ENCODE measurements at regions of chr14 and their contacts with region 1.

Region 1: DNA sequence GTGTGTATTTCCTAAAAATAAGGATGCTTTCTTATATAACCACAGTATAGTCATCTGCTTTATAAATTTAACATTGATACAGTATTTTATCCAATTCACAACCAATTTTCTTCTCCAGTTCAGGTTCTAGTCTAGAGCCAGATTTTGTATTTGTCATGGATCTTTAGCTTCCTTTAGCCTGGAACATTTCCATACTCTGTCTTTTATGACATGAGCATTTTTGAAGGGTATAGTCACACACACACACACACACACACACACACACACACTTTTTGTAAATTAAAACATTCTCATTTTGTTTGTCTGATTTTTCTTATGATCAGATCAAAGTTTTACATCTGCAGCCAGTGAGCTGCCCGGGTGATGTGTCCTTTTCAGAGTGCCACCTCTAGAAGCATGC is 25.4 kb downstream of the CGRRF1 start:
- DNase-seq: no peak
- ATAC-seq: no peak
- H3K4me3 ChIP-seq: no peak overlapping the region
- H3K4me3 Mint-ChIP-seq: no peak overlapping the region
- H3K27ac ChIP-seq: no peak overlapping the region
- H3K27ac Mint-ChIP-seq: no peak overlapping the region
- H3K4me1 ChIP-seq: no peaks in the 10 kb centered on the region
- H3K4me1 Mint-ChIP-seq: peaks cover 0 to 2% (median 0%) of the 10 kb centered on the region in 3 donors
- H3K27me3 ChIP-seq: no peaks in the 10 kb centered on the region
- H3K27me3 Mint-ChIP-seq: no peaks in the 10 kb centered on the region

Region 2: GRCh38 chr14:54147282-54147681 is 387.8 kb before region 1 on chr14:
- CTCF ChIA-PET with region 1: no interaction called
- POLR2A ChIA-PET with region 1: no interaction called
- DNase-seq: no peak
- ATAC-seq: no peak
- H3K4me3 ChIP-seq: no peak overlapping the region
- H3K4me3 Mint-ChIP-seq: no peak overlapping the region
- H3K27ac ChIP-seq: no peak overlapping the region
- H3K27ac Mint-ChIP-seq: no peak overlapping the region
- H3K4me1 ChIP-seq: no peaks in the 10 kb centered on the region
- H3K4me1 Mint-ChIP-seq: no peaks in the 10 kb centered on the region
- H3K27me3 ChIP-seq: peaks cover 0 to 3% of the 10 kb centered on the region in 2 experiments
- H3K27me3 Mint-ChIP-seq: peaks cover 10 to 12% of the 10 kb centered on the region in 2 donors

Region 3: GRCh38 chr14:54555651-54556050 is 20.5 kb after region 1 on chr14:
- CTCF ChIA-PET with region 1: no interaction called
- POLR2A ChIA-PET with region 1: interaction called in 1 of 2 experiments, 15 read pairs
- DNase-seq: no peak
- ATAC-seq: no peak
- H3K4me3 ChIP-seq: no peak overlapping the region
- H3K4me3 Mint-ChIP-seq: no peak overlapping the region
- H3K27ac ChIP-seq: no peak overlapping the region
- H3K27ac Mint-ChIP-seq: no peak overlapping the region
- H3K4me1 ChIP-seq: no peaks in the 10 kb centered on the region
- H3K4me1 Mint-ChIP-seq: no peaks in the 10 kb centered on the region
- H3K27me3 ChIP-seq: peaks cover 0 to 6% of the 10 kb centered on the region in 2 experiments
- H3K27me3 Mint-ChIP-seq: peaks cover 10 to 12% of the 10 kb centered on the region in 2 donors

Measured in T-cell (primary cell).